Activated CD4-positive, alpha-beta memory T cell treated with anti-CD3 and anti-CD28 coated beads for 36 hours (primary cell): ENCODE measurements at regions of chr13 and their contacts with region 1.

Region 1: DNA sequence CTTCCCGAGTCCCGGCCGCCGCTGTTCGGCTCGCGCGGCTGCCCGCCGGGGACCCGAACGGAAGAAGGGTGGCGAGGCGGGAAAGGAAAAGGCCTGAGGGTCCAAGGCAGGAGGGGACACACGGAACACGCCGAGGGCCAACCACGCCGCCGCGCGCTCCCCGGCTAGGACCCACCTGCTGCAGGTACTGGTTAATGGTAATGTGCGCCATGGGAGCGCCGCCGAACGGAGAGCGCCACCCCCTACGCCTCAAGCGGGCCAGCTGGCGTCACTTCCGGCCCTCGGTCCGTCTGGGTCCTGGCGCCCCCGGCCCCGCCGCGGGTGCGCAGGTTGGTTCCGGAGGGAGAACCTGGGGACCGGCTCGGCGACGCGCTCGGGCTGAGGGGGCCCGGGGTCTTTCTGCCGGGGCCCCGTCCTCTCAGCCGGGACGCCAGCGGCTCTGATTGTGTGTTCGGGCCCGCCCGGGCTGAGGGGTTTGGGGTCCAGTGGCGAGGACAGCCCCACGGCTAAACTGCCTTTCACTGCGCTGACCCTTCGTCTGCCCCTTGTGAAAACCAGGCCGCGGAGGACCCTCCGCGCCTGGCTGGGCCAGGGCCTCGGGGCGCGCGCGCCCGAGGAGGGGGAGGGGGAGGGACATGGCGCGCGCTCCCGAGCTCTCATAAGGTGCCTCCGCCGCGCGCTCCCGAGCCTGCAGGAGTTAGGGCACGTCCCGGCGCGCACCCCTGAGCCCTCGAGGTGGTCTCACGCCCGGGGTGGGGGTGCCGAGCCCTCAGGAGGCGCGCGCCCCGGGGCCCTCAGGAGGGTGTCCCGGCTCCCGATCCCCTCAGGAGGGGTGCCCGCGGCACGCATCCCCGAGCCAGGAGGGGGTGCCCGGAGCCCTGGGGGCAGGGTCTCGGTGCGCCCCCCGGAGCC is at the start of gene PCID2:
- DNase-seq: peak; percentile 92
- H3K4me3 Mint-ChIP-seq: peak within 1 kb of the TSS; percentile 83
- H3K27ac Mint-ChIP-seq: peak within 1 kb of the TSS; percentile 60
- H3K4me1 Mint-ChIP-seq: peaks cover 56% of the 10 kb centered on the region
- H3K27me3 Mint-ChIP-seq: no peaks in the 10 kb centered on the region
- total RNA-seq, gene PCID2: 66.6 to 72.4 TPM

Region 2: DNA sequence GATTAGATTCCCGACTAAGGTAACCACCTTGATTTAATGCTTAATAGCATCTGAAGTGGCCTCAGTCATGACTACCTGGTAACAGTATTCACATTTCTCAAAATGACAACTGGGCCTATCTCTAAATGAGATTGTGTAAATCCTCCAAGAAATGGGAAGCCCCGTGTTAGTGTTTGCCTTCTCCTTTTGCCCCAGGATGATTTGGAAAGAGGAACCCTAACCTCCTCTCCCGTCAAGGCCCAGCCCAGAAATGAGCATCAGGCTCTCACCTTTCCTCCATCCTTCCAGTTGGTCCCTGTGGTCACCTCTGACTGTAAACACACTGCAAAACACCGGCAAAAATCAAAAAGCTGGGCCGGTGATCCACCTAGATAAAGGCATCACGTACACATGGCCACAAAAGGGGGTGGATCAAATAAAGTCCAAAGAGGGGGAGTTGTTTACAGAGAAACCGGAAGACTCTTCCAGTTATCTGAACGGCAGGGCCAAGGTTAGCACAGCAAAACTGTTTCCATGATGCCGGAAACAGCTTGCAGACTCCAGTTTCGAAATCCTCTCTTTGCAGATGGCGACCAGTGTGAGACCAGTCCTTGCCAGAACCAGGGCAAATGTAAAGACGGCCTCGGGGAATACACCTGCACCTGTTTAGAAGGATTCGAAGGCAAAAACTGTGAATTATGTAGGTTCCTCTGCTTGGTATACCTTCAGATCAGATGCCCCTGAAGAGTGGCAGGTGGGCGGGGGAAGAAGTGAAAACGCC is 69.7 kb before region 1 on chr13:
- CTCF ChIA-PET with region 1: no interaction called
- POLR2A ChIA-PET with region 1: no interaction called
- intact Hi-C with region 1: no loop called
- DNase-seq: no peak
- H3K4me3 Mint-ChIP-seq: no peak overlapping the region
- H3K27ac Mint-ChIP-seq: no peak overlapping the region
- H3K4me1 Mint-ChIP-seq: no peaks in the 10 kb centered on the region
- H3K27me3 Mint-ChIP-seq: no peaks in the 10 kb centered on the region

Region 3: DNA sequence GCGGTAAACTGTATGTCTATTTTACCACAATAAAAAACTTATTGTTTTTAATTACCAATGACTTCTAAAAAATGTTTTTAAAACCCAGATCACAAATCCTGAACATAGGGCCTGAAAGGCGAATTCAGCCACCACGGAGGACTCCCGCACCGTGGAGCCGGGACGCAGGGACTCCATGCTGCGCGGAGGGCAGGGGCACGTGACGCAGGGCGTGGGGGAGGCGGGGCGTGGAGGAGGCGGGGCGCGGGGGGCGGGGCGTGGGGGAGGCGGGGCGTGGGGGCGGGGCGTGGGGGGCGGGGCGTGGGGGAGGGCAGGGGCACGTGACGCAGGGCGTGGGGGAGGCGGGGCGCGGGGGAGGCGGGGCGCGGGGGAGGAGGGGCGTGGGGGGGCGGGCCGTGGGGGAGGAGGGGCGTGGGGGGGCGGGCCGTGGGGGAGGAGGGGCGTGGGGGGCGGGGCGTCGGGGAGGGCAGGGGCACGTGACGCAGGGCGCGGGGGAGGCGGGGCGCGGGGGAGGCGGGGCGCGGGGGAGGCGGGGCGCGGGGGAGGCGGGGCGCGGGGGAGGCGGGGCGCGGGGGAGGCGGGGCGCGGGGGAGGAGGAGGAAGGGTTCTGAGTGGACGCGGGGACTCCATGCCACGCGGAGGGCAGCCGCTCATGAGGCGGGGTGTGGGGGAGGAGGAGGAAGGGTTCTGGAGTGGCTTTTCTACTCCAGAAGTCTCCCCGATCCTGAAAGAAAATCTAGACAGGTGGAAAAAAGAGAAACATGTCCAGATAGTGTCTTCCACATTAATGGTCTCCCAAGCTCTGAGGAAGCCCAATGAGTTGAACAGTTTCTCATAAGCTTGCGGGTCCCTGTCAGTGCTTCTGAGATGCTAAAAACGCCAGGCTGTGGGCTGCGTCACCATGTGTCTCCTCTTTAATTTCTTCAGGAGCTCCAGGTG is 54.6 kb before region 1 on chr13:
- CTCF ChIA-PET with region 1: no interaction called
- POLR2A ChIA-PET with region 1: interaction called, 3 read pairs
- intact Hi-C with region 1: loop called (anchors 2 kb)
- DNase-seq: peak; percentile 70
- H3K4me3 Mint-ChIP-seq: peak overlapping the region; percentile 69
- H3K27ac Mint-ChIP-seq: peak overlapping the region; percentile 14
- H3K4me1 Mint-ChIP-seq: peaks cover 16% of the 10 kb centered on the region
- H3K27me3 Mint-ChIP-seq: peaks cover 2% of the 10 kb centered on the region

Region 4: DNA sequence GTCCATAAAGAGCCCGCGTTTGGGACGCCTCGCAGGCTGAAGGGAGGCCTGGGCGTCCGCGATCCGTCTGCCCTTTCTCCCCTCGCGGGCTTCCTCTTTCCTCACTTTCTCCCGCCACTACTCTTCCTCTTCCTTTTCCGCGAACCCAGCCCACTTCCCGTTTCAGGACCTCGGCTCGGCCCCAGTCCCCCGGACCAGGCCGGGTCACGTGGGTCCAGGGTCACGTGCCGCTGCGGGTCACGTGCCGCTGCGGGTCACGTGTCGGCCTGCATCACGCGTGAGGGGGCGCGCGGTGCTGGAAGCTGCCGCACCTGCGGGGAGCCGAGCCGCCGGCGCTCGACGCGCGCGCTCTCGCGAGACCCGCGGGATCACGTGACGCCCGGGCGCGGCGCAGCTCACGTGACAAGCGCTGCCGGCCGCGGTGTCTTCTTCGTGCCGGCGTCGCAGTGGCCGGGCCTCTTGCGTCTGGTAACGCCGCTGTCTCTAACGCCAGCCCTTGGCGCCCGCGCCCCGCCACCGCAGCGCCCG is 88.2 kb after region 1 on chr13 and contains the start of gene LAMP1:
- CTCF ChIA-PET with region 1: no interaction called
- POLR2A ChIA-PET with region 1: no interaction called
- intact Hi-C with region 1: loop called (anchors 1 kb)
- DNase-seq: peak; percentile 98
- H3K4me3 Mint-ChIP-seq: peak within 1 kb of the TSS; percentile 98
- H3K27ac Mint-ChIP-seq: peak within 1 kb of the TSS; percentile 98
- H3K4me1 Mint-ChIP-seq: peaks cover 35% of the 10 kb centered on the region
- H3K27me3 Mint-ChIP-seq: peaks cover 12% of the 10 kb centered on the region
- total RNA-seq, gene LAMP1: 45.9 to 46.8 TPM

Region 5: DNA sequence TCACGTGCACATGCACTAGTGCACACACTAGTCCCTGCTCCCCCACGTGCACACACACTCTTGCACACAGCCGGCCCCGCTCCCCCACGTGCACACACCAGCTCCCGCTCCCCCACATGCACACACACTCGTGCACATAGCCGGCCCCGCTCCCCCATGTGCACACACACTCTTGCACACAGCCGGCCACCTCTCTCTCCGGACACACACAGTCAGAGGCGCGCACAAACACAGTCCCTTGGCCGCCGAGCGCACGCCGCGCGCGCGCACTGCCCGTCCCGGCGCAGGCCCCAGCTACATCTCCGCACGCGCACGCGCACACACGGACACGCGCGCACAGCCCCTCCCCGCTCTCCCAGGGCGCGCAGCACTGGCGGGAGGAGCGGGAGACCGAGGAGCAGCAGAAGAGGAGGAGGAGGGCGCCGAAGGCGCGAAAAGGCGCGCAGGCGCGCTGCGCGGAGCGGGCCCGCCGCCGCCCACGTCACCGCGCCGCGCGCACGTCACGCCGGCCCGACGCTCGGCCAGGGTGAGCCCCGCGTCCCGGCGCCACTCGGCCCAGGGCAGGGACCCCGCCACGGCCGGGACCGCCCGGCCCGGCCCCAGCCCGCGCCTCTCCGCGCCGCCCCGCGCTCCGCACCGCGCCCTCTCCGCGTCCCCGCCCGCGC is 375.7 kb after region 1 on chr13 and contains the start of gene TFDP1:
- CTCF ChIA-PET with region 1: no interaction called
- POLR2A ChIA-PET with region 1: no interaction called
- intact Hi-C with region 1: loop called (anchors 5 kb)
- DNase-seq: peak; percentile 89
- H3K4me3 Mint-ChIP-seq: peak within 1 kb of the TSS; percentile 85
- H3K27ac Mint-ChIP-seq: peak within 1 kb of the TSS; percentile 77
- H3K4me1 Mint-ChIP-seq: peaks cover 38% of the 10 kb centered on the region
- H3K27me3 Mint-ChIP-seq: no peaks in the 10 kb centered on the region
- total RNA-seq, gene TFDP1: 149 to 156 TPM